Activated naive CD4-positive, alpha-beta T cell treated with anti-CD3 and anti-CD28 coated beads for 36 hours (primary cell): ENCODE measurements at regions of chr5 and their contacts with region 1.

Region 1: DNA sequence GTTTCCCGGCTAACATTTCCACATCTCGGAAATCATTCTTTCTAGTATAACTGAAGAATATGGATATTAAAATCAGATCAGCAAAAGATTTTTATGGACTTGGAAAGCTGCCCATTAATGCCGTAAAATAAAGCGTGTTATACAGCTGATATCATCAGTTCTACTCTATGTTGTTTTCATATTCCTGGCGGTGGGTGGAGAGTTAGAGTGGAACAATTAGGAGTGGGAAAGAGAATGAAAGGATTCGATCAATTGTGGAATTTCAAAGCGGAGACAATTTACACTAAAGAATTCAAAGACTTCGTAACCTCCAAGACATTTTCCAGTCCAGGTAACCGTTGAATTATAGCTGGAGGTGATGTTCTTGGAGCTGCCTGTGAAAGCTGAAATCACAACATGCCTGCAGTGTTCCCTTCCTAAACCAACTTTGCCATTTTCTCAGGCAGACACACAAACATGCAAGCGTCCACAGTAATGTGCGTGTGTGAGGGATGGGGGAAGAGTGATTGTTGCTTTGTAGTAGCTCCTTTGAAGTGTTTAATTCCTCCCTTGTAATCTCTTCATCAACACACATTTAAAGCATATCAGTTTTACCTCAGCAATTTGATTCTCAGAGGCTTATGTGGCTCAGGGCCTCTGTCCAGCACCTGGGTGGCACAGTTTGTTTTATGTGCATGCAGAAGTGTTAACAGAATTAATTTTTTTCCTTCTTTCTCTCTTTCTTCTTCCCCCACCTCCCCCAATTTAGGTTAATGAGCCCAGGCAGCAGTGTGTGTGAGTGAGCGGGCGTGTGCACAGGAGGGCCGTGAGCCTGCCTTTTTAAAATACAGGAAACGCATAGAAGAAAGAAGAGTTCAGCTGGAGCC is 544.1 kb downstream of the RAB3C start:
- DNase-seq: no peak
- H3K4me3 Mint-ChIP-seq: no peak overlapping the region
- H3K27ac Mint-ChIP-seq: no peak overlapping the region
- H3K4me1 Mint-ChIP-seq: peaks cover 27% of the 10 kb centered on the region
- H3K27me3 Mint-ChIP-seq: no peaks in the 10 kb centered on the region

Region 2: DNA sequence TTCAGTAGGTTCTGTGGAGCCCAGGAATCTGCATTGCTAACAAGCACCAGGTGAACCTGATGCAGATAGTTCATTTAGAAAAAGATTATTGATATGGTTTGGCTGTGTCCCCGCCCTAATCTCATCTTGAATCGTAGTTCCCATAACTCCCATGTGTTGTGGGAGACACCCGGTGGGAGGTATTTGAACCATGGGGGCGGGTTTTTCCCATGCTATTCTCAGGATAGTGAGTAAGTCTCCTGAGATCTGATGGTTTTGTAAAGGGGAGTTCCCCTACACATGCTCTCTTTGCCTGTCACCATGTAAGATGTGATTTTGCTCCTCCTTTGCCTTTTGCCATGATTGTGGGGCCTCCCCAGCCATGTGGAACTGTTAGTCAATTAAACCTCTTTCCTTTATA is 332.1 kb before region 1 on chr5:
- CTCF ChIA-PET with region 1: no interaction called
- intact Hi-C with region 1: loop called (anchors 1 kb)
- DNase-seq: peak; percentile 84
- H3K4me3 Mint-ChIP-seq: no peak overlapping the region
- H3K27ac Mint-ChIP-seq: no peak overlapping the region
- H3K4me1 Mint-ChIP-seq: peaks cover 6% of the 10 kb centered on the region
- H3K27me3 Mint-ChIP-seq: peaks cover 5% of the 10 kb centered on the region

Region 3: DNA sequence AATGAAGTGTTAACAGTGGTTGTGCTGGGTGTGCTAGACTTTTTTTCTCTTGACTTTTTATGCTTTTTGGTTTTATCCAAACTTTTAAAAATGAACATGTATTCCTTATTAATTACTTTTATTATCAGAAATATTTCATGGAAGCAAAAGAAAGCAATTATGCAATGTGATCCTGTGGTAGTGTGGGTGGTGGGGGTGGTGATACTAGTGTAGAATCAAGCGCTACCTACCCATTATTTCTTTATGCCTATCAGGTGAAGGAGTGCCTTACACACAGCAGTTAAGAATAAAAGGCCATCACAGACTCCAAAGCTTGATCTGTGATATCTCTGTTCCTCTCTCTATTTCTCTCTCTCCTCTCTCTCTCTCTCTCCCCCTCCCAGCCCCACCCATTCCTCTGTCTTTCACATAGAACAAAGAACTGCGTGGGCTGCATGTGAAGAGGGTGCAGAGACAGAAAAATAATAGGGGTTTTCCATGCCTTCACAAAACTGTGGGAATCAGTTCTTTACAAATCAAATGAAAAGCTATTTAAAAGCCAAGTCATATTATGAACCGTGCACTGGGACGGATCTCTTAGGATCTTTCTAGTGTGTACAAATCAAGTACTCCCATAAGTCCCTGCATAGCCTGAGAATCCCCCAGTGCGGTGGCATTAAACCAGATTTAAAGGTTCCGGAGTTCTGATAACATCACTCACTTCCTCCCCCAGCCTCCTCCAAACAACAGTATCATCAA is 192.9 kb before region 1 on chr5:
- CTCF ChIA-PET with region 1: no interaction called
- intact Hi-C with region 1: loop called (anchors 2 kb)
- DNase-seq: peak; percentile 76
- H3K4me3 Mint-ChIP-seq: peak overlapping the region; percentile 20
- H3K27ac Mint-ChIP-seq: peak overlapping the region; percentile 3
- H3K4me1 Mint-ChIP-seq: peaks cover 30% of the 10 kb centered on the region
- H3K27me3 Mint-ChIP-seq: no peaks in the 10 kb centered on the region

Region 4: GRCh38 chr5:59099270-59099994 is 27.5 kb before region 1 on chr5:
- CTCF ChIA-PET with region 1: interaction called, 5 read pairs
- intact Hi-C with region 1: loop called (anchors 1 kb)
- DNase-seq: peak; percentile 68
- H3K4me3 Mint-ChIP-seq: no peak overlapping the region
- H3K27ac Mint-ChIP-seq: peak overlapping the region; percentile 20
- H3K4me1 Mint-ChIP-seq: peaks cover 32% of the 10 kb centered on the region
- H3K27me3 Mint-ChIP-seq: no peaks in the 10 kb centered on the region

Region 5: DNA sequence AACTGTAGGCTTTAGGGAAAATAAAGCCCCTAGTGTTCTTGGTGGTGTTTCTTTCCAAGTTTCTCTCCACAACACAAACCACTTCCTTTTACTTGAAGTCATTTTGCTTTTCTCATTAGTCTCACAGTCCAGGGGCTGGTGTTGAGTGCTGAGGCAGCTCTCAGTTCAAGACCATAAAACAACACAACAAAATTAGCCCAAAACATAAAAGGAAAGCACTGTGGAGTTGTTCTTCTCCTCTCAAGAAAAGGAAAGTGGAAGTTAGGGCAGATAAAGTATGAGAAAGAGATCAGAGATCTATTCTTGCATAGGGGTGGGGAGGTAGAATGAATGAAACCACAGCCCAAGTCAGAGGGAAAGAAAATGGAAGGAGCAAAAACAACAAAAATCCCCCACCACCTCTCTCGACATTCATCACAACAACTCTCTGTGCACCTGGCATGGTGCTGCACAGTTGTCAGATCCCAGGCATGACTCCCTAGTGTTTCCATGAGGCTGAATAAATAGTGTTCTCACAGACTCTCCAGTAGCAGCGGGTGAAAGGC is 25.8 kb after region 1 on chr5:
- CTCF ChIA-PET with region 1: interaction called, 5 read pairs
- intact Hi-C with region 1: loop called (anchors 1 kb)
- DNase-seq: peak; percentile 19
- H3K4me3 Mint-ChIP-seq: no peak overlapping the region
- H3K27ac Mint-ChIP-seq: peak overlapping the region; percentile 71
- H3K4me1 Mint-ChIP-seq: peaks cover 3% of the 10 kb centered on the region
- H3K27me3 Mint-ChIP-seq: no peaks in the 10 kb centered on the region

Region 6: DNA sequence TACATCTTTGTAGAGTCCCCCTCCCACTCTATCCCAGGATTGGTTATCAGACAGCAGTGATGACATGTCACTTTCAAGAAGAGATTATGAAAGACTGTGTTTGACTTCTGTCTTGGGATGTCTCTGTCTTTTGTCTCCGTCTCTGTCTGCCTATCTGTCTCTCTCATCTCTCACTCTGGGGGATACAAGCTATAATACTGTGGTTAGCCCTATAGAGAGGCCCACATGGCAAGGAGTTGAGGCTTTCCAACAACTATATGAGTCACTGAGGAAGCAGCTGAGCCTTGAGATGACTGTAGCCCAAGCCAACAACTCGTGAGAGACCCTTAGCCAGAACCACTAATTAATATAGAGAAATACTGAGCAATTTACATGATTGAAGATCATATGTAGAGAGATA is 481.8 kb after region 1 on chr5:
- CTCF ChIA-PET with region 1: no interaction called
- intact Hi-C with region 1: loop called (anchors 1 kb)
- DNase-seq: peak; percentile 21
- H3K4me3 Mint-ChIP-seq: no peak overlapping the region
- H3K27ac Mint-ChIP-seq: peak overlapping the region; percentile 38
- H3K4me1 Mint-ChIP-seq: peaks cover 13% of the 10 kb centered on the region
- H3K27me3 Mint-ChIP-seq: peaks cover 14% of the 10 kb centered on the region